K562 (cell line): ENCODE measurements at regions of chr6 and their contacts with region 1.

Region 1: DNA sequence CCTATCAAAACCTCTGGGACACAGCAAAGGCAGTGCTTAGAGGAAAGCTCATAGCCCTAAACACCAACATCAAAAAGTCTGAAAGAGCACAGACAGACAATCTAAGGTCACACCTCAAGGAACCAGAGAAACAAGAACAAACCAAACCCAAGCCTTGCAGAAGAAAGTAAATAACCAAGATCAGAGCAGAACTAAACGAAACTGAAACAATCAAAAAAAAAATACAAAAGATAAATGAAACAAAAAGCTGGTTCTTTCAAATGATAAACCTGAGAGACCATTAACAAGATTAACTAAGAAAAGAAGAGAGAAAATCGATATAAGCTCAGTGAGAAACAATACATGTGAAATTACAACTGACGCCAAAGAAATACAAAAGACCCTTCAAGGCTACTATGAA is 34.8 kb upstream of the RUNX2 start:
- DNase-seq: no peak
- ATAC-seq: no peak; the same call in 2 of the 3 replicates
- H3K4me3 ChIP-seq: no peak overlapping the region
- H3K27ac ChIP-seq: peak overlapping the region; percentile 65; the same call in 2 of the 3 replicates
- H3K4me1 ChIP-seq: peaks cover 2 to 15% of the 10 kb centered on the region in 2 experiments; a peak in 3 of 5 replicates
- H3K27me3 ChIP-seq: no peaks in the 10 kb centered on the region
- CTCF ChIP-seq: no peak
- EP300 ChIP-seq: no peak
- POLR2A ChIP-seq: no peak
- RAD21 ChIP-seq: no peak

Region 2: DNA sequence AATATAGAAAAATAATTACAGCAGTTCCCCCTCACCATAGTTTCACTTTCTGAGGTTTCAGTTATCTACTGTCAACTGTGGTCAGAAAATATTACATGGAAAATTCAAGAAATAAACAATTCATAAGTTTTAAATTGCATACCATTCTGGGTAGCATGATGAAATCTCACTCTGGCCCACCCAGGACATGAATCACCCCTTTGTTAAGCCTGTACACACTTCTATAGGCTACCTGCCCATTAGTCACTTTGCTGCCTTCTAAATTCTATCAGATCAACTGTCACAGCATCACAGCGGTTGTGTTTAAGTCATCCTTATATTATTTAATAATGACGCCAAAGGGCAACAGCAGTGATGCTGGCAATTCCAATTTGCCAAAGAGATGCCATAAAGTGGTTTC is 105.5 kb before region 1 on chr6:
- CTCF ChIA-PET with region 1: no interaction called
- POLR2A ChIA-PET with region 1: no interaction called
- in situ Hi-C with region 1: no loop called
- intact Hi-C with region 1: loop called (anchors 5 kb)
- DNase-seq: no peak
- ATAC-seq: no peak
- H3K4me3 ChIP-seq: no peak overlapping the region
- H3K27ac ChIP-seq: no peak overlapping the region
- H3K4me1 ChIP-seq: peaks cover 0 to 17% of the 10 kb centered on the region in 2 experiments; a peak in 2 of 5 replicates
- H3K27me3 ChIP-seq: no peaks in the 10 kb centered on the region
- CTCF ChIP-seq: no peak
- EP300 ChIP-seq: no peak
- POLR2A ChIP-seq: no peak
- RAD21 ChIP-seq: no peak